Endothelial cell of umbilical vein (primary cell): ENCODE measurements at regions of chr18 and their contacts with region 1.

Region 1: GRCh38 chr18:25345081-25345866 is 6.7 kb downstream of the ZNF521 start:
- DNase-seq: no peak
- H3K4me3 ChIP-seq: no peak overlapping the region
- H3K27ac ChIP-seq: no peak overlapping the region
- H3K4me1 ChIP-seq: peaks cover 33% of the 10 kb centered on the region
- H3K27me3 ChIP-seq: no peaks in the 10 kb centered on the region
- CTCF ChIP-seq: no peak
- POLR2A ChIP-seq: no peak

Region 2: GRCh38 chr18:25334588-25334987 is 10.7 kb before region 1 on chr18:
- CTCF ChIA-PET with region 1: interaction called, 5 read pairs
- POLR2A ChIA-PET with region 1: no interaction called
- dilution Hi-C with region 1: no loop called
- intact Hi-C with region 1: loop called (anchors 1 kb)
- DNase-seq: no peak
- H3K4me3 ChIP-seq: no peak overlapping the region
- H3K27ac ChIP-seq: no peak overlapping the region
- H3K4me1 ChIP-seq: peaks cover 8% of the 10 kb centered on the region
- H3K27me3 ChIP-seq: no peaks in the 10 kb centered on the region
- CTCF ChIP-seq: no peak
- POLR2A ChIP-seq: no peak